Ascending aorta (tissue), 2 donors: ENCODE measurements at regions of chr2 and their contacts with region 1.

Region 1: GRCh38 chr2:33275689-33276444 is 200.6 kb upstream of the RASGRP3 start:
- DNase-seq: peak; percentile 87 to 95
- H3K4me3 ChIP-seq: no peak overlapping the region
- H3K27ac ChIP-seq: peak overlapping the region; percentile 93
- H3K4me1 ChIP-seq: peaks cover 0 to 36% of the 10 kb centered on the region in 2 donors
- H3K27me3 ChIP-seq: no peaks in the 10 kb centered on the region
- CTCF ChIP-seq: no peak

Region 2: DNA sequence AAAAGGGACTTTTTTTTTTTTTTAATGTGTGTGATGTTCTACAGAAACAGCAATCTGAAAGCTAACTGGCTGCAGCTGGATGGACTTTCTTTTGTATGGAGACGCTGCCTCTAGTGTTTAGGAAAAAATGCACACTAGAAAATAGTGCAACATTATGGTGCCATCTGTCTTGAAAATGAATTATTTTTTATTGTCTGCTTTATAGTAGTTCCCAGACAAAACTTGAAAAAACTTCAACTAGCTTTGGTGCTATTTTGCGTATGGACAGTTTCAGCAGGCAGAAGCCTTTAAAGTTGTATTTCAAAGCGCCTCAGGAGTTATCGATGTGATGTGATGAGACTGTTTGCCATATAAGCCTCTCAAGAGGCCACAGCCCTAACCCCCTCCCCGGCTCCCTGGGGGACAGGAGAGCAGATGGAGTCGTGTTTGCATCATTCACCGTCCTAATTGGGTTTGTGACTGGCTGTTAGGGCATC is 242.2 kb before region 1 on chr2:
- intact Hi-C with region 1: loop called (anchors 2 kb)
- DNase-seq: no peak
- H3K4me3 ChIP-seq: peak overlapping the region; percentile 27 to 67
- H3K27ac ChIP-seq: peak overlapping the region in 1 of 2 donors; percentile 29
- H3K4me1 ChIP-seq: peaks cover 0 to 12% of the 10 kb centered on the region in 2 donors
- H3K27me3 ChIP-seq: no peaks in the 10 kb centered on the region
- CTCF ChIP-seq: peak; percentile 66 to 76 (median 72)

Region 3: DNA sequence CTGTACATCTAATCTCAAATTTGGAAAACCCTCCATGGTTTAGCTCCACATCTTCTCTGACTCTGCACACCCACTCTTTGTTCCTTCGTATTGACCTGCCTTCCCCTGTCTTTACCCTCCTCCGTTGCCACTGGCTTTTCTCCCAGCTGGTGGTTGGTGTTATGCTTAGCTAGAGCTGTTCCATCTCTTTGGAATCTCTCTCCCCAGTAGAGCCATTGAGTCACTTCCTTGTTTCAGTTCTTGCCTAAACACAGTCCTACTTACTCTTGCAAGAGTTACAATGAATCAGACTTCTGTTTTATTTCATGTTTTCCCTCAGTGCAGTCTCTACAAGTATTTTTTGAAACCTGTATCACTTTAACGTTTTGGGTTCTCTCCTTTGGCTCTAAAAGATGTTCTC is 65.2 kb before region 1 on chr2:
- intact Hi-C with region 1: loop called (anchors 5 kb)
- DNase-seq: peak; percentile 35 to 89
- H3K4me3 ChIP-seq: no peak overlapping the region
- H3K27ac ChIP-seq: peak overlapping the region; percentile 87 to 95
- H3K4me1 ChIP-seq: peaks cover 17 to 63% of the 10 kb centered on the region in 2 donors
- H3K27me3 ChIP-seq: no peaks in the 10 kb centered on the region
- CTCF ChIP-seq: no peak

Region 4: DNA sequence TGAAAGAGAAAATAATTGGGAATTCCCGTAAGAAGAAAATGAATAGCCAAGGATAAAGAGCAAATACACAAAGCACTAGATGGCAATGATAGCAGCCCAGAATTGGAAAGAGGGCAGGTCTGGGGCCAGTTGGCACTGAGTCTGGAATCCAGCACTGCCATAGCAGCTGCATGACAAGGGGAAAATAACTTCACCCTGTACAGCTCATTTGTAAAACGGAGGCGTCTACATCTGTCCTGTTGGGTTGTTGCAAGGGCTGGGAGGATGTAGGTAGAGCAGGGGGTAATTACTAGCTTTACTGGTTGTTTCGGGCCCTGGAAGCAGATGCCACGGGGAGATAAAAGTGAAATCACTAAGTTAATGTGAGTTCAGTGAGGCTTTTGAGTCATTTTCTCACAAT is 90.6 kb after region 1 on chr2:
- intact Hi-C with region 1: loop called (anchors 5 kb)
- DNase-seq: peak in 1 of 2 donors; percentile 85
- H3K4me3 ChIP-seq: no peak overlapping the region
- H3K27ac ChIP-seq: peak overlapping the region; percentile 67 to 77
- H3K4me1 ChIP-seq: peaks cover 9 to 34% of the 10 kb centered on the region in 2 donors
- H3K27me3 ChIP-seq: no peaks in the 10 kb centered on the region
- CTCF ChIP-seq: no peak